ENCODE measurements at regions of chr5 and their contacts with region 1.

Region 1: DNA sequence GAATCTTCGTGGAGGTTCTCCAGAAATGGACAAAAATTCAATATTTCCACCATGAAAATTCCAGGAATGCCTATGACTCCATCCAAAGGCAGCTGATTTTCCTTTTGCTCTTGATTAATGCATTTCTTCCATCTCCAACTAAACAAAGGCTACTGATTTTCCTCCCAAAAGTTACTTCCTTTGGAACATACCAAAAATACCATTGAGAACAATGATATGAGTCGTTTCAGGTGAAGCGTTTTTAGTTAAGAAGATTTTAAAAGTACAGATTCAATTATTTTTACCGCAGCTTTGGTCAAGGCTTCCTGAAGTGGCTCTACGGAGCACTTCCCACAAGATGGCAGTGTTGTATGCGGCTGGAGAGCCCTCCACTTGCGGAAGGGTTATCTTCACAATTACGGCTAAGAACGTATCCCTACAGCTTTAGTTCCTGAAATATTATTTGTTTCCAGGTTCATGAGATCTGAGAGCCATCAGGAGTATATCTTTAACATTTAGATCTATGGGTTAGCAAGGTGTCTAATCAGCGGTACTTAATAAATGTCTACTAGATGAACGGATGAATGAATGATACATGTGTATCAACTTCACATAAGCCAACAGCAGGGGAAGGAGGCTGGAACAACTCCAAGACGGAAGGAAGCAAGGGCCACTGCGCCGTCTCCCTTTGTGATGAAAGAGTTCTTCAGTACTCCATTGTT is 35.9 kb upstream of the ARSB start:
- DNase-seq: no peak
- H3K4me3 ChIP-seq: peak overlapping the region in 1 of 2 donors; percentile 11
- H3K27ac ChIP-seq: no peak overlapping the region
- H3K4me1 ChIP-seq: no peaks in the 10 kb centered on the region
- H3K27me3 ChIP-seq: no peaks in the 10 kb centered on the region
- CTCF ChIP-seq: peak; percentile 37 to 56 (median 44)
- POLR2A ChIP-seq: no peak

Region 2: DNA sequence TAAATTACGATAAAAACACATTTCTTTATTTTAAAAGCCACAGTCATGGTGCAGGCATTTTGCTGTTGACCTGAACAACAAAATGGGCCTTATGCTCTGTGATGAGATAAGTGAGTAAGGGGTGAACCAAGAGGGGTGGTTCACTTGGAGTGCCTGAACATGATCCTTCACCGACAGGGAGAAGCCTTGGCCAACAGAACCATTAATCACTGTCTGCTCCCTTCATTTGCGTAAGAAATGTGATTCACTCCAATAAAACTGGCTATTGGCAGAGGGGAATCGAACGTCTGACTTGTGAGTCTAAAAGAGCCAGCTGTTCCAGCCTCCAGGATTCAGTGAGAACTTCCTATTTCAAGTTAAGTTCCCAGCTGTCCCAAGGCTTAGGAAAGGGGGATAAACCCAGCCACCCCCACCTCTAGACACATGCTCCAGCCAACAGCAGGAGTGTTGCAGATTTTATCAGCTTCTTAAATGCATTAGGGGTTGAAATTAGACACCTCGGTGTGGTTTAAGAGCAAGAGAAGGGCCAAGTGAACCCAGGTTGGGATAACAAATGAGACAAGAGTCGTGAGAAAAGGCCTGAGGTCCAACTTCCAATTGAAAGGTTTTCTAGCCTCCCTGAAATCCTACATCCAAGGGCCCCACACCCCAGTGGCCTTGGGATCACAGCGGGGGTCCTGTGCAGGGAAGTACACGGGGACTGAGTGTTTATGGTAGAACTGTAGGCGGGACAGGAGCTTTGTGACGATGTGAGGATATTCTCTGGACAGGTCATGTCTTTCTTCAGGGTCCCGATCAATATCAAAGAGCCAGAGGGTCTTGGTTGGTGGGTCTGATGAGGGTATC is 241.0 kb before region 1 on chr5:
- intact Hi-C with region 1: no loop called
- DNase-seq: peak in 1 of 2 donors; percentile 97
- H3K4me3 ChIP-seq: no peak overlapping the region
- H3K27ac ChIP-seq: peak overlapping the region; percentile 65
- H3K4me1 ChIP-seq: peaks cover 13% of the 10 kb centered on the region
- H3K27me3 ChIP-seq: no peaks in the 10 kb centered on the region
- CTCF ChIP-seq: no peak
- POLR2A ChIP-seq: no peak

Region 3: GRCh38 chr5:79124607-79125006 is 103.6 kb after region 1 on chr5:
- intact Hi-C with region 1: loop called (anchors 5 kb)
- DNase-seq: no peak
- H3K4me3 ChIP-seq: no peak overlapping the region
- H3K27ac ChIP-seq: no peak overlapping the region
- H3K4me1 ChIP-seq: no peaks in the 10 kb centered on the region
- H3K27me3 ChIP-seq: no peaks in the 10 kb centered on the region
- CTCF ChIP-seq: no peak
- POLR2A ChIP-seq: no peak

Region 4: GRCh38 chr5:79297661-79298060 is 276.6 kb after region 1 on chr5:
- intact Hi-C with region 1: no loop called
- DNase-seq: no peak
- H3K4me3 ChIP-seq: no peak overlapping the region
- H3K27ac ChIP-seq: no peak overlapping the region
- H3K4me1 ChIP-seq: peaks cover 5% of the 10 kb centered on the region
- H3K27me3 ChIP-seq: no peaks in the 10 kb centered on the region
- CTCF ChIP-seq: no peak
- POLR2A ChIP-seq: no peak

Region 5: GRCh38 chr5:79464695-79465332 is 443.8 kb after region 1 on chr5:
- intact Hi-C with region 1: loop called (anchors 10 kb)
- DNase-seq: no peak
- H3K4me3 ChIP-seq: no peak overlapping the region
- H3K27ac ChIP-seq: no peak overlapping the region
- H3K4me1 ChIP-seq: no peaks in the 10 kb centered on the region
- H3K27me3 ChIP-seq: no peaks in the 10 kb centered on the region
- CTCF ChIP-seq: peak in 2 of 3 experiments; percentile 5 to 39
- POLR2A ChIP-seq: no peak

Measured in vagina (tissue), 2 donors.